Activated CD4-positive, alpha-beta T cell treated with anti-CD3 and anti-CD28 coated beads for 36 hours (primary cell): ENCODE measurements at regions of chr2 and their contacts with region 1.

Region 1: GRCh38 chr2:117936871-117937428 is 76.9 kb downstream of the CCDC93 start:
- DNase-seq: no peak
- ATAC-seq: no peak
- H3K4me3 Mint-ChIP-seq: no peak overlapping the region
- H3K27ac Mint-ChIP-seq: no peak overlapping the region
- H3K4me1 Mint-ChIP-seq: no peaks in the 10 kb centered on the region
- H3K27me3 Mint-ChIP-seq: no peaks in the 10 kb centered on the region

Region 2: GRCh38 chr2:117820444-117820843 is 116.5 kb before region 1 on chr2:
- CTCF ChIA-PET with region 1: no interaction called
- POLR2A ChIA-PET with region 1: no interaction called
- intact Hi-C with region 1: loop called (anchors 10 kb)
- DNase-seq: peak; percentile 64
- ATAC-seq: peak; percentile 98
- H3K4me3 Mint-ChIP-seq: no peak overlapping the region
- H3K27ac Mint-ChIP-seq: peak overlapping the region; percentile 86
- H3K4me1 Mint-ChIP-seq: peaks cover 55% of the 10 kb centered on the region
- H3K27me3 Mint-ChIP-seq: no peaks in the 10 kb centered on the region